Activated CD4-positive, alpha-beta memory T cell treated with anti-CD3 and anti-CD28 coated beads for 36 hours (primary cell): ENCODE measurements at regions of chr6 and their contacts with region 1.

Region 1: DNA sequence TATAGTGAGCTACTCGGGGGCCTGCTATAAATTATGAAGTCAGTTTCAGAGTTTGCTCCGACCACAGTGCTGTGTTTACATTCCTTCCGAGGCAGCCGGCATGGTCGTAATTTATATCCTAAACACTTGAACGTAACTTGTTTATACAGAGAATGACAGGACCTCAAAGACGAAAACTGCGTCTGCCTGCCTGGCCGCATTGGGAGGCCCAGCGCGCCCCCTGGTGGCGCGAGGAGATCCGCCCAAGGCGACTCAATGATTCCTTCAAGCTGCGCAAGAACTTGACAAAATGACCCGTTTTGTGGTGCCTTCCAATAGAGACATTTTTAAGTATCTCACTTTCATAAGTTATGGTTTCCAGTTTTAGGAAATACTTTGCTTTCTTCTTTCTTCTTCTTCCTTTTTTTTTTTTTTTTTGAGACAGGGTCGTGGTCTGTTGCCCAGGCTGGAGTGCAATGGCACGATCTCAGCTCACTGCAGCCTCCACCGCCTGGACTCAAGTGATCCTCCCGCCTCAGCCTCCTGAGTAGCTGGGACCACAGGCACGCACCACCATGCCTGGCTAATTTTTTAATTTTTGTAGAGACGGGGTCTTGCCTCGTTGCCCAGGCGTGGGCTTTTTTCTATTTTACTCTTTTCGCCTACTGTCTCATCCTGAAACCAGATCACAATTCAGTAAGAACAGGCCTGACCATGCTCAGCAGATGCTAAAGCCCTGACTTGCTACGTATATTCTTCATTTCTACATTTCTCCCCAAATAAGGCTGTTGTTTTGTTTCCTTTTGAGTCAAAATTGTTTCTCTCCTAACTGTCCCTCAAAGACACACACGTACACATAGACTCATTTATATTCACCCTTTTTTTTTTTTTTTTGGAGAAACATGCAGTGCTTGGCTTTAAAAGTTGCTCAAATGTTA is 7.8 kb downstream of the FOXF2 start:
- DNase-seq: peak; percentile 77
- H3K4me3 Mint-ChIP-seq: peak overlapping the region; percentile 12
- H3K27ac Mint-ChIP-seq: no peak overlapping the region
- H3K4me1 Mint-ChIP-seq: peaks cover 6% of the 10 kb centered on the region
- H3K27me3 Mint-ChIP-seq: peaks cover 45% of the 10 kb centered on the region

Region 2: GRCh38 chr6:797479-798077 is 599.6 kb before region 1 on chr6:
- CTCF ChIA-PET with region 1: interaction called, 31 read pairs
- POLR2A ChIA-PET with region 1: no interaction called
- intact Hi-C with region 1: loop called (anchors 5 kb)
- DNase-seq: peak; percentile 40
- H3K4me3 Mint-ChIP-seq: no peak overlapping the region
- H3K27ac Mint-ChIP-seq: no peak overlapping the region
- H3K4me1 Mint-ChIP-seq: no peaks in the 10 kb centered on the region
- H3K27me3 Mint-ChIP-seq: peaks cover 48% of the 10 kb centered on the region

Region 3: DNA sequence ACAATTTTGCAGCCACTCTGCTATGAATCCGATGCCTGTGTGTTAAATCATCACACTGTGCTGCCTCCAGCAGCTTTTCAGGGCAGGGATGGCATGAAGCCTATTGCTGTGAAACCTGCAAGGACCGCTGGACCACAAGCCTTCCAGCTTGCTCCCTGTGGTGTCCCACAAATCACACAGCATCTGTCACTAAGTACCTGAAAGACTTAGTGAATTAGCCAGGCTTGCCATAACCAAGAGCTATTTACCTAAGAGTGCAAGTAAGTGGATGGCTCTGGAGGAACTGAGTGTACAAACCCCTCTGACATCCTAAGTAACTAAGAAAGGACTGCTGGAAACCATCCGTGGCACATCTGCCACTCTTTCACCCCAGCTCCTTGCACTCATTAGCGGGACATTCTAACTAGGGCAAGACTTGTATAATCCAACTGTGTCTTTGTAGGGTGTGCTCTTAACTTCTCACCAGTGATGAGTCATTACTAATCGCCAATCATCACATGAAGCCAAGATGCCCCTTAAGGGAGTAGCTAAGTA is 50.6 kb before region 1 on chr6:
- CTCF ChIA-PET with region 1: no interaction called
- POLR2A ChIA-PET with region 1: no interaction called
- intact Hi-C with region 1: no loop called
- DNase-seq: no peak
- H3K4me3 Mint-ChIP-seq: no peak overlapping the region
- H3K27ac Mint-ChIP-seq: no peak overlapping the region
- H3K4me1 Mint-ChIP-seq: no peaks in the 10 kb centered on the region
- H3K27me3 Mint-ChIP-seq: peaks cover 39% of the 10 kb centered on the region

Region 4: DNA sequence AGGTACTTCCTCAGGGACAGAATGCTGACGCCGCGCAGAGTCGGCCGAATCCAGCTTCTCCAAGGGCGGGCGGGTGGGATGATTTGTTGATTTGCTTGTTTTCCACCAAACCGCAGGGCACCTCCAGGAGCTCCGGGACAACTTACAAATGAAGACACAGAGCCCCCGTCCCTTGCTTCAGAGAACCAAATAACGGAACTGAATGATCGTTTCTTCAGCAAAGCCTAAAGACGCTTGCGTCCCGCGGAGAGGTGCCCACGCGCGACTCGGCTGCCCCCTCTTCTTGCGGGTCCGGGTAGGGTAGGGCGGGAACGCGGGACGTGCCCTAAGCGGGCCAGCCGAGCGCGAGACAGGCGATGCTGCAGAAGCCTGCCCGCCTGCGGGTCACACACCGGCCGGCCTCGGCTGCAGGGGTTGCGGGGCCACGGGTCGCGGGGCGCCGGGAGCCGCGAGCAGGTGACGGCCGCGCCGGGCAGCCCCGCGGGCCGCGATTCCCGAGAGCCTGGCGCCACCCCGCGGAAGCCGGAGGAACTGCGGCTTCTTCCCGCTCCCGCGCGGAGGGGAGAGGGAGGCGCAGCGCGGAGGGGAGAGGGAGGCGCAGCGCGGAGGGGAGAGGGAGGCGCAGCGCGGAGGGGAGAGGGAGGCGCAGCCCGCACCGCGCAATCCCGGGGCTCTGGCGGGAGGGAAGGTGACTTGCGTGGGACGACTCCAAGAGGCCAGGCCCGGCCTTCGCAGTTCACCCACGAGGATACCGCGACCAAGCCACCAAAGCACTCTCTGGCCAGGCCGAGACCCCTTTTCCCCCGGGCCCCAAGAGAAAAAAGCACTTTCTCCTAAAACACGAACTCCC is 15.5 kb before region 1 on chr6:
- CTCF ChIA-PET with region 1: interaction called, 14 read pairs
- POLR2A ChIA-PET with region 1: no interaction called
- intact Hi-C with region 1: loop called (anchors 2 kb)
- DNase-seq: peak; percentile 72
- H3K4me3 Mint-ChIP-seq: no peak overlapping the region
- H3K27ac Mint-ChIP-seq: no peak overlapping the region
- H3K4me1 Mint-ChIP-seq: peaks cover 31% of the 10 kb centered on the region
- H3K27me3 Mint-ChIP-seq: peaks cover 70% of the 10 kb centered on the region

Region 5: DNA sequence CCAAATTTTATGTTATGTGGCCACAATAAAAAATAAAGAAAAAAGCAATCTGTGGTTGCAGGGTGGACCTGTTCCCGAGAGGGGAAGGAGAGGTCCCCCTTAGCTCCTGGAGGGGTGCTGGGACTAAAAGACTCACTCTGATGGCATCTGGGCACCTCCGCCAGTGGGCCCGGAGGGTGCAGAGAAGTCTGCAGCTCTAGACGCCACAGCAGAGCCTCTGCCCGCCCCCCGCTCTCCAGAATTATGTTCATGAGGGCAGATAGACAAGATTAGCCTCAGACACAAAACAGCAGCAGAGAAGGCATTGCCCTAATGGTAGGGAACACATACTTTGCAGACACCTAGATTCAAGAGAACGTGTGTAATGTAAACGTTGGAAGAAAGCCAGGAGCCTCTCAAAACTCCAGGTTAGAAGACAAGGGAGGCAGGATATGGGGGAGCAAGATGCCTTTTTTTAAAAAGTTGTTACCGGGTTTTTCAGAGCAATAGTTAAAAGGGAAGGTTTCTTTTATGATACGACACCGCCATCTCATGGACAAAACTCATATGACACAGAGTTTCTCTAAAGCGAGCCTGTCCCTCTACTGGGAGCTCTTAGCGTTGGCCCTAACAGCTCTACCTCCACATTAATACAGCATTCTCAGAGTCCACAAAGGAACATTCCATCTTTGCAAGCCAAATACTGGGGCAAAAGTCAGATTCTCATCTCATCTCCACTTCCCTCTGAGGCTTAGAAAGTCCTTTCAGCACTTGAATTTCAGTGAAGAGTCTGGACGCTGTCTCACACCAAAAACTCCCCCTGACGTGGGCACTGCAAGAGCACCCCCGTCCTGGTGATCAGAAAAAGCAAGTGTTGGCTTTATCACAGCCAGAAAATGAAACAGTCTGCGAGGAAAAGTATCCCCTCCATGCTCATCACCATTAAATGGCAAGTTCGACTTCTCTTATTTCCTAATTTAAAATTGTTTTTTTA is 39.4 kb after region 1 on chr6:
- CTCF ChIA-PET with region 1: interaction called, 3 read pairs
- POLR2A ChIA-PET with region 1: no interaction called
- intact Hi-C with region 1: loop called (anchors 5 kb)
- DNase-seq: peak; percentile 32
- H3K4me3 Mint-ChIP-seq: no peak overlapping the region
- H3K27ac Mint-ChIP-seq: no peak overlapping the region
- H3K4me1 Mint-ChIP-seq: no peaks in the 10 kb centered on the region
- H3K27me3 Mint-ChIP-seq: peaks cover 35% of the 10 kb centered on the region